CD14-positive monocyte (primary cell): ENCODE measurements at regions of chr12 and their contacts with region 1.

Region 1: DNA sequence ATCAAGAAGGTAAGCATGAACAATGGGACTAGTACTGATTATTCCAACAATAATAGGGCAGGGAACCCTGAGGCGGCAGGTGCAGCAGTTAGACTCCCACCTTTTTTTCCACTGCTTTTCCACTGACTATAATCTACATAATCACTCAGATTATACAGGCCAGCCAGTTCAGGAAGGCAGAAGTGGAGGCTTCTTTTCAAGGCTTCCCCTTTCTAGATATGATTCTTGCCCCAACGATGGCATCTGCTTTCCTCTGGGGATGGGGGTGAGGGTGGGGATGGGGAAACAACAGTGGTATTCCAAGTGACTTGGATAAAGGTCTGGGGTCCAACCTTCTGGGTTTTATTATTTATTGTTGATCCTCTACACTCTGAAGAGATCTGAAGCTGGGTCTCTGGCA is 331 bp downstream of the NCKAP1L start:
- DNase-seq: peak; percentile 24 to 52 (median 28)
- H3K4me3 ChIP-seq: peak overlapping the region; percentile 83 to 99 (median 97)
- H3K4me3 Mint-ChIP-seq: peak overlapping the region; percentile 88 to 95
- H3K27ac ChIP-seq: peak overlapping the region; percentile 77 to 97
- H3K27ac Mint-ChIP-seq: peak overlapping the region; percentile 95 to 98 (median 98)
- H3K4me1 ChIP-seq: peaks cover 36 to 46% of the 10 kb centered on the region in 2 donors
- H3K4me1 Mint-ChIP-seq: peaks cover 46% of the 10 kb centered on the region
- H3K27me3 ChIP-seq: no peaks in the 10 kb centered on the region
- H3K27me3 Mint-ChIP-seq: peaks cover 0 to 2% (median 2%) of the 10 kb centered on the region in 3 donors
- CTCF ChIP-seq: peak; percentile 8

Region 2: DNA sequence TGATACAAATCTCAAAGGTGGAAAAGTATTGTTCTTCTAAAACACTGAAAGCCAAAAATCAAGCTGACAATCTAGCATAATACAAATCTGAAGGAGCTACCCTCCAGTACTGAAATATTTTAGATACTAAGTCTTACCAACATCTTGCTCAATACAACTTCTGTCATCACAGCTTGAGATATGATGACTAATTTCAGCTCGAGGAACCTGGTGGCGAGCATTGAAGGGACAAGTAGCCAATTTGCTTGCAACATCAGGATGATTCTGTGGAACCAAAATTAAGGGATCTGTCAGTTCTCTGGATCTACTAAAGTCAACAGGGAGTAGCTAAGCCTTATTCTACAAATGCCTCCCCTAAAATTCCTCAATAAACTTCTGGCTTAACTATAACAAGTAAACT is 34.8 kb before region 1 on chr12:
- intact Hi-C with region 1: loop called in 1 of 2 experiments (anchors 5 kb)
- DNase-seq: peak; percentile 86 to 95 (median 95)
- H3K4me3 ChIP-seq: no peak overlapping the region
- H3K4me3 Mint-ChIP-seq: no peak overlapping the region
- H3K27ac ChIP-seq: peak overlapping the region in 1 of 2 donors; percentile 34
- H3K27ac Mint-ChIP-seq: peak overlapping the region in 3 of 7 donors; percentile 54 to 82 (median 68)
- H3K4me1 ChIP-seq: peaks cover 12 to 15% of the 10 kb centered on the region in 2 donors
- H3K4me1 Mint-ChIP-seq: peaks cover 15% of the 10 kb centered on the region
- H3K27me3 ChIP-seq: no peaks in the 10 kb centered on the region
- H3K27me3 Mint-ChIP-seq: peaks cover 0 to 1% (median 0%) of the 10 kb centered on the region in 3 donors
- CTCF ChIP-seq: no peak